AG04449 (cell line): ENCODE measurements at regions of chr6 and their contacts with region 1.

Region 1: GRCh38 chr6:134822920-134823709 is 126.8 kb downstream of the ALDH8A1 start:
- DNase-seq: no peak
- H3K4me3 ChIP-seq: no peak overlapping the region
- CTCF ChIP-seq: peak; percentile 79

Region 2: DNA sequence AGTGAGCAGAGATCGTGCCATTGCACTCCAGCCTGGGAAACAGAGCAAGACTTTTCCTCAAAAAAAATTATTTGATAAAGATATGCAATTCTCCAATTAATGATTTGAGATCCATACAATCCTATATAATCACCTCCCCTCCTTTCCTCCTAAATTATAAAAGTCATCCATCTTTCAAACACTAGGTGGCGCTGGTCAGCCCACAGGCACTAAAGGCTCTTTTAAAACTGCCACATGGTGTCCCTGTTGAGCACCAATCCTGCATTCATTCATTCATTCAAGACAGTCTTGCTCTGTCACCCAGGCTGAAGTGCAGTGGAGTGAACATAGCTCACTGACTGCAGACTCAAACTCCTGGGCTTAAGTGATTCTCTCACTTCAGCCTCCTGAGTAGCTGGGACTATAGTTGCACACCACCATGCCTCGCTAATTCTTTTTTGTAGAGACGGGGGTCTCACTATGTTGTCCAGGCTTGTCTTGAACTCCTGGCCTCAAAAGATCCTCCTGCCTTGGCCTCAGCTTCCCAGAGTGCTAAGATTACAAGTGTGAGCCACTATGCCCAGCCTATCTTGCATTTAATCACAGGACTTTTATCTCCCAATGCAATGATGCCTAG is 711.9 kb before region 1 on chr6:
- CTCF ChIA-PET with region 1: interaction called, 36 read pairs
- POLR2A ChIA-PET with region 1: no interaction called
- DNase-seq: no peak
- H3K4me3 ChIP-seq: no peak overlapping the region
- CTCF ChIP-seq: peak; percentile 69

Region 3: GRCh38 chr6:134123666-134124208 is 699.4 kb before region 1 on chr6:
- CTCF ChIA-PET with region 1: interaction called, 47 read pairs
- POLR2A ChIA-PET with region 1: no interaction called
- DNase-seq: no peak
- H3K4me3 ChIP-seq: no peak overlapping the region
- CTCF ChIP-seq: peak; percentile 45

Region 4: GRCh38 chr6:134166511-134167261 is 656.4 kb before region 1 on chr6:
- CTCF ChIA-PET with region 1: interaction called, 15 read pairs
- POLR2A ChIA-PET with region 1: interaction called, 5 read pairs
- DNase-seq: no peak
- H3K4me3 ChIP-seq: no peak overlapping the region
- CTCF ChIP-seq: no peak

Region 5: DNA sequence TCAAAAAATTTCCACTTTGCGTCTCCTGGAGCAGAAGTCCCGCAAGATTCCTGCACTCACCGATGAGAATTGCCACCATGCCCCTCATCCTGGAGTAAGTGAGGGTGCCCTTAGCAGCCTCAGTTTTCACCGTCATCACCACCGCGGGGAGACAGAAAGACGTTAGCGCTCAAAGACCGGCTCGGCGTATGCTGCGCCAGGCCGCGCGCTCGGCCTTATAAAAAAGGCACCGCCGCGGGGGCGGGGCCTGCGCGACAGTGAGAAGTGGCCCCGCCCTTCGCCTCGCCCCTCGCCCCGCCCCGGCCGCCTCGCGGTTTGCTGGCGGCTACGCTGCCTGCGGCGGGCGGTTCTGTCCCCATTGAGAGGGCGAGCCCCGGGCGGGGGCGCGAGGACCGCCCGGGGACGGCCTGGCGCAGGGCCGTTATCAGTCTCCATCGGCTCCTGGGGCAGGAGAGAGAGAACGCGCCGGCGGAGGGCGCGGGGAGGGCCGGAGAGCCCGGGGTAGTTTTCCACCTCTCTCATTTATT is 648.4 kb before region 1 on chr6:
- CTCF ChIA-PET with region 1: interaction called, 14 read pairs
- POLR2A ChIA-PET with region 1: interaction called, 8 read pairs
- DNase-seq: no peak
- H3K4me3 ChIP-seq: peak overlapping the region; percentile 90
- CTCF ChIP-seq: no peak

Region 6: DNA sequence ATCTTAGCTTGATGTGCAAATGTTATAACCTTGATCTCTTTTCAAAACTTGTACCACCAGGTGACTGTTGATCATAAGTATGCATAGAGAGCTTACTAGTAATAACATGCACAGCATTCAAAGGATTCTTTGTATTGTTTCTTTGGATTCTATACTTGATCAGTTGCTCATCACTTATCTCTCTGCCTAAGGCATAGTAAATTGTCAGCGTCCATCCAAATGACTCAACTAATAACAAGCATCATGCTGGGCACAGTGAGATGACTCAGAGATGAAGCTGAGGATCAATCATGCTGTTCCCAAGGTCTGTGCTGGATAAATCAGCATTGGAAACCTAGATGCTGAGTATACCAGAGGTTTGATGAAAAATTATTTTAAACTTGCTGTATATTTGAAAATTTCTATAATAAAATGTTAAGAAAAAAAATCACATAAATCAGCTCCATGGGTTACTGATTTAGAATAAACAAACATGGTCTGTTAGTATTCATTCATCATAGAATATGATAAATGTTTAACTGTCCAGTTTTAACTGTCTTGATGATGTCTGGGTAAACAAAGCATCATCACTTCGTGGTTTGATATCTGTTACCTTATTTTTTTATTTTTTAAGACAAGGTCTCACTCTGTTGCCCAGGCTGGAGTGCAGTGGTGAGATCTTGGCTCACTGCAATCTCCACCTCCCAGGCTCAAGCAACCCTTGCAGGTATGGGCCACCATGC is 459.6 kb before region 1 on chr6:
- CTCF ChIA-PET with region 1: no interaction called
- POLR2A ChIA-PET with region 1: no interaction called
- DNase-seq: no peak
- H3K4me3 ChIP-seq: no peak overlapping the region
- CTCF ChIP-seq: no peak

Region 7: GRCh38 chr6:134835993-134836392 is 12.9 kb after region 1 on chr6:
- CTCF ChIA-PET with region 1: interaction called, 12 read pairs
- POLR2A ChIA-PET with region 1: no interaction called
- DNase-seq: no peak
- H3K4me3 ChIP-seq: no peak overlapping the region
- CTCF ChIP-seq: no peak